IMR-90 (cell line): ENCODE measurements at regions of chr17 and their contacts with region 1.

Region 1: GRCh38 chr17:36136036-36136435 is 32.4 kb downstream of the CCL4 start:
- DNase-seq: no peak
- ATAC-seq: no peak
- H3K4me3 ChIP-seq: no peak overlapping the region
- H3K27ac ChIP-seq: no peak overlapping the region
- H3K4me1 ChIP-seq: no peaks in the 10 kb centered on the region
- H3K27me3 ChIP-seq: no peaks in the 10 kb centered on the region
- CTCF ChIP-seq: no peak
- POLR2A ChIP-seq: no peak
- RAD21 ChIP-seq: no peak

Region 2: GRCh38 chr17:36198831-36199465 is 62.9 kb after region 1 on chr17:
- CTCF ChIA-PET with region 1: no interaction called
- POLR2A ChIA-PET with region 1: no interaction called
- dilution Hi-C with region 1: no loop called
- in situ Hi-C with region 1: loop called (anchors 5 kb)
- intact Hi-C with region 1: no loop called
- DNase-seq: no peak
- ATAC-seq: no peak
- H3K4me3 ChIP-seq: no peak overlapping the region
- H3K27ac ChIP-seq: no peak overlapping the region
- H3K4me1 ChIP-seq: no peaks in the 10 kb centered on the region
- H3K27me3 ChIP-seq: peaks cover 7% of the 10 kb centered on the region
- CTCF ChIP-seq: no peak
- POLR2A ChIP-seq: no peak
- RAD21 ChIP-seq: no peak